ENCODE measurements at regions of chr16 and their contacts with region 1.

Region 1: GRCh38 chr16:15888072-15888976 is at the start of gene CEP20:
- DNase-seq: peak; percentile 99 to 100
- ATAC-seq: peak; percentile 100
- H3K4me3 ChIP-seq: peak within 1 kb of the TSS; percentile 86
- H3K27ac ChIP-seq: peak within 1 kb of the TSS; percentile 90 to 98
- H3K4me1 ChIP-seq: peaks cover 48% of the 10 kb centered on the region
- CTCF ChIP-seq: no peak
- EP300 ChIP-seq: no peak
- POLR2A ChIP-seq: peak; percentile 74
- RAD21 ChIP-seq: no peak
- polyA plus RNA-seq, gene CEP20: 97.5 and 102 TPM in 2 replicates

Region 2: GRCh38 chr16:15792559-15792971 is 95.8 kb before region 1 on chr16:
- CTCF ChIA-PET with region 1: no interaction called
- POLR2A ChIA-PET with region 1: no interaction called
- DNase-seq: no peak
- ATAC-seq: no peak
- H3K4me3 ChIP-seq: no peak overlapping the region
- H3K27ac ChIP-seq: no peak overlapping the region
- H3K4me1 ChIP-seq: peaks cover 7% of the 10 kb centered on the region
- CTCF ChIP-seq: no peak
- EP300 ChIP-seq: no peak
- POLR2A ChIP-seq: no peak
- RAD21 ChIP-seq: no peak

Region 3: GRCh38 chr16:15899538-15900100 is 11.3 kb after region 1 on chr16:
- CTCF ChIA-PET with region 1: interaction called, 14 read pairs
- POLR2A ChIA-PET with region 1: interaction called, 25 read pairs
- DNase-seq: peak; percentile 95
- ATAC-seq: peak; percentile 96 to 99
- H3K4me3 ChIP-seq: no peak overlapping the region
- H3K27ac ChIP-seq: peak overlapping the region; percentile 90 to 91
- H3K4me1 ChIP-seq: peaks cover 50% of the 10 kb centered on the region
- CTCF ChIP-seq: no peak
- EP300 ChIP-seq: peak; percentile 54 to 86; a peak in 2 of 5 replicates
- POLR2A ChIP-seq: no peak
- RAD21 ChIP-seq: peak; percentile 39 to 58

Region 4: DNA sequence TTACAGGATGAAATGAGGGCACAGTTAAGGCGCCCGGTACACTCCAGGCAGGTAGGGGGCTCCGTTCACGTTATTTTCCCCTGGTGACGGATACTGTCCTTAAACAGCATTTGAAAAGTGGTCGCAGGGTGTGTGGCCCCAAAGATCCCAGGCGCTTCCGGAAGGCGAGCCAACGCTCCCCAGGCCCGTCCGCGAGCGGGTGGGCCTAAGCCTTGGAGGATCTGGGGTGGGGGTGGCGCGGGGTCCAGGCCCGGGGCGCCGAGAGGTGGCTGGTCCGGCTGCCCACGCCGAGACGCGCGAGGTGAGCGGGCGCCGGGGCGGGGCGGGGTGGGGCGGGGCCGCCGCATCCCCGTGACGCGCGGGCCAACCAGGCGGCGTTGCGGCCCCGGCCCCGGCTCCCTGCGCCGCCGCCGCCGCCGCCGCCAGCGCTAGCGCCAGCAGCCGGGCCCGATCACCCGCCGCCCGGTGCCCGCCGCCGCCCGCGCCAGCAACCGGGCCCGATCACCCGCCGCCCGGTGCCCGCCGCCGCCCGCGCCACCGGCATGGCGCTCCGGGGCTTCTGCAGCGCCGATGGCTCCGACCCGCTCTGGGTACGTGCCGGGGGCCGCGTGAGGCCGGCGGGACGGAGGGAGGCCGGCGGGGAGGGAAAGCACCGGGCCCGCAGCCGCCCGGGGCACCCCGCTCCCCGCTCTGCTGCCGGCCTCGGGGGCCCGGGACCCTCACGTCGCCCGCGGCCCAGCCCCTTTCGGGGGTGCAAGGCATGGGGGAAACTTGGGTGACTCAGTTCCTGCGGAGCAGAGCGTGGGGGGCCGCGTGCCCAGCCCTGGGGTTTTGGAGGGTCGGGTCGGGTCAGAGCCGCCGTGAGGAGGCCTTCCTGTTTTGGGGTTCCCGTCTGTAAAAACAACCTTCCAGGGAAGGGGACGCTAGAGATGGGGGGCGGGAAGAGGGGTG is 61.2 kb after region 1 on chr16 and contains the start of gene ABCC1:
- CTCF ChIA-PET with region 1: interaction called, 3 read pairs
- POLR2A ChIA-PET with region 1: interaction called, 10 read pairs
- DNase-seq: peak; percentile 63 to 65
- ATAC-seq: peak; percentile 56 to 82
- H3K4me3 ChIP-seq: peak within 1 kb of the TSS; percentile 97
- H3K27ac ChIP-seq: peak within 1 kb of the TSS; percentile 100
- H3K4me1 ChIP-seq: peaks cover 69% of the 10 kb centered on the region
- CTCF ChIP-seq: peak; percentile 23; the same call in 1 of the 3 replicates
- EP300 ChIP-seq: no peak
- POLR2A ChIP-seq: peak; percentile 28
- RAD21 ChIP-seq: peak in 1 of 2 experiments; percentile 29; a peak in 1 of 5 replicates
- polyA plus RNA-seq, gene ABCC1: 56.5 and 108 TPM in 2 replicates

Region 5: GRCh38 chr16:15966420-15967222 is 78.3 kb after region 1 on chr16:
- CTCF ChIA-PET with region 1: no interaction called
- POLR2A ChIA-PET with region 1: interaction called, 11 read pairs
- DNase-seq: peak; percentile 92 to 94
- ATAC-seq: peak; percentile 92 to 99
- H3K4me3 ChIP-seq: no peak overlapping the region
- H3K27ac ChIP-seq: peak overlapping the region; percentile 81 to 95
- H3K4me1 ChIP-seq: peaks cover 70% of the 10 kb centered on the region
- CTCF ChIP-seq: no peak
- EP300 ChIP-seq: peak in 1 of 2 experiments; percentile 43; a peak in 2 of 5 replicates
- POLR2A ChIP-seq: no peak
- RAD21 ChIP-seq: peak in 1 of 2 experiments; percentile 26; a peak in 3 of 5 replicates

Measured in A549 (cell line).